GM23248 (cell line): ENCODE measurements at regions of chr11 and their contacts with region 1.

Region 1: DNA sequence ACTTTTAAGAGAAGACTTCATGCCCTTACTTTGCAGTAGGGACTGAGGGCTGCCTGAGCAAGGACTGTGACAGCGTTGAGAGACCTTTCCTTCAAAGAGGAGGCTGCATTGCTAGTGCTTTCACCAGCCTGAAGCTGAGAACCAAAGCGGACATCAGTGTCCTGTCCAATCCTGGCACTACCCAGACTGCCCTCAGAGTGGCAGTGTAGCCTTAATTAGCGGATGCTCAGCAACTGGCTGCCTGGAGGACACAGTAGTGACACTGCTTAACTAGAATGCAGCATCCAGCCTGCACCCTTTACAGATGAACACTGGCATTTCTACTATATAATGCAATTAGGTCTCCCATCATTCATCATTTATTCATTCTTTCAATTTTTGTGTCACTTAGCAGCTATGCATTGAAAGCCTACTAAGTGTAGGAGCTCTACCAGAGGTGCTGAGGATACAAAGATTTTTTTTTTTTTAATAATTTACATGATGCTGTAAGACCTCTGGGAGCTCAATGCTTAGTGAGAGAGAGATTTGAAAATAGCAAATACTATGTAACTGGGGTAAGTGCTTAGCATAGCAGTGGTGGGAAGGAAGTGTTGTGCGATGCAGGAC is 36.9 kb upstream of the SLC36A4 start:
- DNase-seq: peak; percentile 90
- H3K4me3 ChIP-seq: no peak overlapping the region
- H3K27ac ChIP-seq: no peak overlapping the region
- H3K4me1 ChIP-seq: no peaks in the 10 kb centered on the region
- H3K27me3 ChIP-seq: peaks cover 26% of the 10 kb centered on the region

Region 2: GRCh38 chr11:93288079-93288478 is 53.4 kb after region 1 on chr11:
- in situ Hi-C with region 1: no loop called
- DNase-seq: no peak
- H3K4me3 ChIP-seq: no peak overlapping the region
- H3K27ac ChIP-seq: no peak overlapping the region
- H3K4me1 ChIP-seq: no peaks in the 10 kb centered on the region
- H3K27me3 ChIP-seq: no peaks in the 10 kb centered on the region

Region 3: GRCh38 chr11:93330446-93330984 is 95.8 kb after region 1 on chr11 and contains the start of gene DEUP1:
- in situ Hi-C with region 1: no loop called
- DNase-seq: peak; percentile 4
- H3K4me3 ChIP-seq: peak within 1 kb of the TSS; percentile 29; the same call in 1 of the 2 replicates
- H3K27ac ChIP-seq: no peak within 1 kb of the TSS
- H3K4me1 ChIP-seq: no peaks in the 10 kb centered on the region
- H3K27me3 ChIP-seq: peaks cover 18% of the 10 kb centered on the region
- total RNA-seq, gene DEUP1: not detected in 2 replicates

Region 4: DNA sequence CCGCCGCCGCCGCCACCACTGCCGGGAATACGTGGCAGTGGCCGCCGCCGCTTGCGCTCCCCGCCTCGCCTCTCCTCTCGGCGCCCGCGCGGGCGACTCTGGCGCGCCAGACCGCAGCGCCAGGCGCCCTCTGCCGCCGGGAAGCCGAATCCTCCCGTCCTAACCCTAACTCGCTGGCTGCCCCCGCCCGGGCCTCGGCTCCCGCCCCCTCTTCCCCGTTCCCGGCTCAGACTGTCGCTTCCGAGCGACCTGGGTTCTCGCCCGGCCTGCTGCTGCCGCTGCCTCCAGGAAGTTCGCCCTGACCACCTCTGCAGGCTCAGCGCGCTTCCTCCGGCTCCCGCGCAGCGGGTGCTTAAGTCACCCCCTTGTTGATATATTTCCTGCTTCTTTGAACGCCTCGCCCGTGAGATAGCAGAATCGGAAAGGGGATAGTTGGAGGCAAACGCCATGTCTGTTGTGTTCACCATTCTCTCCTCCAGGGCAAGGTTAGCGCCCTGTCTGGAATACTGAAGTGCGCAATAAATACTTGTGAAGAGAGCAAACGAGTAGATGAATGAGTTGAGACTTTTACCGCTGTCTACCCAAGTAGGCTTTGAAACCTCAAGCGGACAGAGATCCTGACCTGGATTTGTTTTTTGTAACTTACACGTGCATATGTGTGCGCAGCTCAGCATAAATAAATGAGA is 308.7 kb after region 1 on chr11 and contains the start of gene SMCO4:
- in situ Hi-C with region 1: loop called (anchors 10 kb)
- DNase-seq: peak; percentile 92
- H3K4me3 ChIP-seq: peak within 1 kb of the TSS; percentile 87
- H3K27ac ChIP-seq: peak within 1 kb of the TSS; percentile 59
- H3K4me1 ChIP-seq: no peaks in the 10 kb centered on the region
- H3K27me3 ChIP-seq: peaks cover 13% of the 10 kb centered on the region
- total RNA-seq, gene SMCO4: 12.9 and 20.7 TPM in 2 replicates

Region 5: DNA sequence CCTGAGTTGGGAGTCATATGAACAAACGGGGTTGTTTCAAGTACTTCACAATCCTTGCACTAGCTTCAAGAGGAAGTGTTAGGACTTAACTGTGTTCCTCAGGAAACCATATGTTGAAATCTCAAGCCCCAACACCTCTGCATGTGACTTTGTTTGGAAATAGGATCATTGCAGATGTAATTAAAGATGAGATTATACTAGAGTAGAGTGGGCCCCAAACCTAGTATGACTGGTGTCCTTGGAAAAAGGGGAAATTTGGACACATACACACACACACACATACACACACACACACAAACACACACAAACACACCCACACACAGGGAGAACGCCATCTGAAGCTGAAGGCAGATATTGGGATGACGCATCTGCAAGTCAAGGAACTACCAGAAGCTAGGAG is 420.3 kb after region 1 on chr11:
- in situ Hi-C with region 1: loop called (anchors 5 kb)
- DNase-seq: no peak
- H3K4me3 ChIP-seq: no peak overlapping the region
- H3K27ac ChIP-seq: no peak overlapping the region
- H3K4me1 ChIP-seq: no peaks in the 10 kb centered on the region
- H3K27me3 ChIP-seq: peaks cover 20% of the 10 kb centered on the region